ENCODE measurements at regions of chr15 and their contacts with region 1.

Region 1: GRCh38 chr15:60326824-60327654 is 70.7 kb downstream of the ANXA2 start:
- DNase-seq: no peak
- ATAC-seq: no peak
- H3K4me3 Mint-ChIP-seq: no peak overlapping the region
- H3K27ac Mint-ChIP-seq: no peak overlapping the region
- H3K4me1 Mint-ChIP-seq: peaks cover 47% of the 10 kb centered on the region
- H3K27me3 Mint-ChIP-seq: no peaks in the 10 kb centered on the region
- CTCF ChIP-seq: peak; percentile 77

Region 2: DNA sequence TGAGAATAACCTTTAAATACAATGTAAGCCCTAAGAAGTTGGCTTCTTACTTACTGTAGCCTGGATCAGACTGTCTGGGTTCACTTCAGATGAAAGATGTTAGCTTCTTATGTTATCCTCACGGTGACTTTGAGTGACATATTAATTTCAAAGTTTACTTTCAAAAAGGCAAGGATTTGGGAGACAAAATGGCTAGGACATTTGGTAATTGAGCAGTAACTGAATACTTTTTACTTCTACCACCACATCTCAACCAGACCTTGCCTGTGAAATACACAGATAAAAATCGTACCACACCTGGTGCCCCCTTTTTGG is 601.9 kb before region 1 on chr15:
- CTCF ChIA-PET with region 1: interaction called, 43 read pairs
- POLR2A ChIA-PET with region 1: no interaction called
- DNase-seq: no peak
- ATAC-seq: no peak
- H3K4me3 Mint-ChIP-seq: no peak overlapping the region
- H3K27ac Mint-ChIP-seq: no peak overlapping the region
- H3K4me1 Mint-ChIP-seq: no peaks in the 10 kb centered on the region
- H3K27me3 Mint-ChIP-seq: no peaks in the 10 kb centered on the region
- CTCF ChIP-seq: no peak

Region 3: DNA sequence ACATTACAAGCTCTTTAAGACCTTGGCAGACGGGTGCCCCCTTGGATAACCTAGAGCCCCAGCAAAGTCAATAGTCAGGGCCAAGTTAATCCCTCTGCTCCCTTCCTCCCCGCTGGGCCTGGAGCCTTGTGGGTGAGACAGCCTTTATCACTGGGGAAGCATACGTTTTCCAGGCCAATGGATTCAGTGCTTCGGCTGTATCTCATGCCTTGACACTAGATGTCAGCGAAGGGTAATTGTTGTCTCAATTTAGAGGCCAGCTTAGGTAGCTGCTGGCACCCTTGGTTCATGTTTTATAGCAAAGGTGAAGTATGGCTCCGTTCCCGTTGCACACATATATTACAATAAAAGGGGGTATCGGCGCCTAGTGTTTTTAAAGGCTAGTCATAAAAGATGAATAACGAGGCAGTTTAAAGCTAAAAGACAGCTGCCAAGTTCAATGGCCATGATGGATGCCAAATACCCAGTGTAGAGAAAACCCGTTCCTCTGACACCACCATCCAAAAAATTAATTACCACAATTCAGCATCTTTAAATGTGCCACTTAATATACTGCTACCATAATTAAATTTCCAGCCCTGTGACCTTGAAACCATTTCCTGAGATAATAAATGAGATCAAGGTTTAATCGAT is 585.6 kb before region 1 on chr15:
- CTCF ChIA-PET with region 1: interaction called, 25 read pairs
- POLR2A ChIA-PET with region 1: no interaction called
- DNase-seq: peak; percentile 33
- ATAC-seq: peak; percentile 91
- H3K4me3 Mint-ChIP-seq: no peak overlapping the region
- H3K27ac Mint-ChIP-seq: no peak overlapping the region
- H3K4me1 Mint-ChIP-seq: no peaks in the 10 kb centered on the region
- H3K27me3 Mint-ChIP-seq: peaks cover 8% of the 10 kb centered on the region; the same call in 1 of the 2 replicates
- CTCF ChIP-seq: no peak

Region 4: DNA sequence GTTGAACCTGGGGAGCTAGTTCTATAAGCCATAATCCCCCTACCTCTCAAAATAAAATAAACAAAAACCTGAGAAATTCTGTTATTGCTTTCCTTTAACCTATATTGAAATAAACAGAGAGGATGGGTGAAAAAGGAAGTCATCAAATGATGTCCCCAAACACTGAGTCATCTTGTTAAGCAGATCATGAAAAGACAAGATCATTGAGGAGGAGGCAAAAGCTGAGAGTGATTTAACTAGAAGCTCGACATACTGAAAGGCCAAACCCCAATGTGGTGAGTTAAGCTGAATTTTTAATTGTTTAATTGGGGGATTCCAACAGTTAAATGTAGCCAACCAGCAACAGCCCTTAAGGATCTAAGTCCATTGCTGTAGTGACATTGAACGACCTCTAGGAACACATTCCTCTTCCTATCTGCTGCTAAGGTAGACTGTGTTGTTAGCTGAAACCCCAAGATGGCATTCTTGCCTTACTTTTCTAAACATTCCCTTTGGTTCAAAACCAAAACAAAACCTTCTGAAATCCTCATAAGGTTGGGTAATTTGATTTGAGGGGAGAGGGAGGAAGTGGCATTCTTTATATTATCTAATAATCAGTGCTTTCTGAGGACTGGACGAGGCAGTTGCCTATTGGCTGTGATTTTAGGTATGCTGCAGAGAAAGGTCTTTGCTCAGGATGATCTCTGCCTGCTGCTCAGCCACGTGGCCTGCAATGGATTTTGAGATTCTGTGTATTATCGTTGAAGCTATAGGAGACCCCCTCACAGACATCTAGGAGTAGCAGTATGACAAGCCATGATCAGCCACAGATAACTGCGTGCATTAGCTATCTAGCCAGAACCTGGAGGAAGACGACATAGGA is 575.3 kb before region 1 on chr15:
- CTCF ChIA-PET with region 1: interaction called, 34 read pairs
- POLR2A ChIA-PET with region 1: no interaction called
- DNase-seq: no peak
- ATAC-seq: peak; percentile 100
- H3K4me3 Mint-ChIP-seq: no peak overlapping the region
- H3K27ac Mint-ChIP-seq: no peak overlapping the region
- H3K4me1 Mint-ChIP-seq: no peaks in the 10 kb centered on the region; the same call in none of the 2 replicates
- H3K27me3 Mint-ChIP-seq: no peaks in the 10 kb centered on the region
- CTCF ChIP-seq: peak; percentile 30; the same call in 1 of the 2 replicates

Region 5: DNA sequence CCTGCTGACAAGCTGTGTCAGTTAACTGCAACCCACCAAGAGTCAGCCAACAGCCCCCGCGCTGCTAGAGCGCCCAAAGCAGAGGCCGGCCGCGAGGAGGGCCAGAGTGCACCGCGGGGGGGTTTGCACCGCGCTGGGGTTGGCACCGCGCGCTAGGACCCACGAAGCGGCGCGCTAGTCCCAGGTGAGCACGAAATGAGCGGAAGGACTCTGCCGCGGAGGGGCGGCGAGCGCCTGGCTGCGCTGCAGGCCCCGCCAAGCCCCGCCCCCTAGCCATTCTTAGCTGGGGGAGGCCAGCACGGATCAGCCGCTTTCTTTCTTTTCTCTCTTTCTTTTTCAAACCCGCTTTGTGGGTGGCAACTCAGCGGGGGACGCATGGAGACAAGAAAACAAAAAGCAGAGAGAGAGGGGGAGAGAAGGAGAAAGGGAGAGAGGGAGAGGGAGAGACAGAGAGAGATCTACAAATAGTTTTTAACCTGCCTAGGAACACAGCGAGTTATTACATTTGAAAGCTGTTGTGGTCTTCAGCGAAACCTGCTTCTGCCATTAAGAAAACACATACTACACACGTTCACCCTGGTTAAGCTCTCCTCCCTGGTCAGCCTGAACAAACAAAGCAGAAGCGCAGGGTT is 329.9 kb before region 1 on chr15:
- CTCF ChIA-PET with region 1: interaction called, 15 read pairs
- POLR2A ChIA-PET with region 1: no interaction called
- DNase-seq: peak; percentile 96
- ATAC-seq: peak; percentile 45
- H3K4me3 Mint-ChIP-seq: peak overlapping the region; percentile 87
- H3K27ac Mint-ChIP-seq: peak overlapping the region; percentile 99
- H3K4me1 Mint-ChIP-seq: peaks cover 75% of the 10 kb centered on the region
- H3K27me3 Mint-ChIP-seq: peaks cover 12% of the 10 kb centered on the region
- CTCF ChIP-seq: no peak

Region 6: GRCh38 chr15:60006203-60006862 is 320.7 kb before region 1 on chr15:
- CTCF ChIA-PET with region 1: interaction called, 15 read pairs
- POLR2A ChIA-PET with region 1: interaction called, 4 read pairs
- DNase-seq: peak; percentile 88
- ATAC-seq: peak; percentile 54
- H3K4me3 Mint-ChIP-seq: peak overlapping the region; percentile 87
- H3K27ac Mint-ChIP-seq: peak overlapping the region; percentile 97
- H3K4me1 Mint-ChIP-seq: peaks cover 66% of the 10 kb centered on the region
- H3K27me3 Mint-ChIP-seq: peaks cover 31% of the 10 kb centered on the region
- CTCF ChIP-seq: no peak

Region 7: GRCh38 chr15:60215225-60215963 is 111.6 kb before region 1 on chr15:
- CTCF ChIA-PET with region 1: interaction called, 19 read pairs
- POLR2A ChIA-PET with region 1: no interaction called
- DNase-seq: no peak
- ATAC-seq: peak; percentile 92
- H3K4me3 Mint-ChIP-seq: no peak overlapping the region
- H3K27ac Mint-ChIP-seq: no peak overlapping the region
- H3K4me1 Mint-ChIP-seq: no peaks in the 10 kb centered on the region; the same call in 1 of the 2 replicates
- H3K27me3 Mint-ChIP-seq: no peaks in the 10 kb centered on the region
- CTCF ChIP-seq: no peak

Measured in WTC11 (cell line).